HCT116 (cell line): ENCODE measurements at regions of chr15 and their contacts with region 1.

Region 1: GRCh38 chr15:91852741-91853510 is 582 bp upstream of the SLCO3A1 start:
- DNase-seq: no peak
- ATAC-seq: peak; percentile 80
- H3K4me3 ChIP-seq: peak overlapping the region; percentile 51 to 65
- H3K27ac ChIP-seq: no peak overlapping the region; the same call in 1 of the 2 replicates
- H3K4me1 ChIP-seq: peaks cover 0 to 16% of the 10 kb centered on the region in 2 experiments; a peak in 2 of 4 replicates
- H3K27me3 ChIP-seq: peaks cover 11% of the 10 kb centered on the region; the same call in 1 of the 2 replicates
- CTCF ChIP-seq: peak; percentile 43 to 70 (median 60)
- POLR2A ChIP-seq: no peak
- RAD21 ChIP-seq: peak; percentile 52

Region 2: GRCh38 chr15:91302588-91303439 is 550.1 kb before region 1 on chr15:
- CTCF ChIA-PET with region 1: interaction called, 3 read pairs
- POLR2A ChIA-PET with region 1: no interaction called
- RAD21 ChIA-PET with region 1: no interaction called
- intact Hi-C with region 1: loop called (anchors 2 kb)
- DNase-seq: peak; percentile 51
- ATAC-seq: peak; percentile 89
- H3K4me3 ChIP-seq: no peak overlapping the region
- H3K27ac ChIP-seq: no peak overlapping the region
- H3K4me1 ChIP-seq: no peaks in the 10 kb centered on the region
- H3K27me3 ChIP-seq: peaks cover 74% of the 10 kb centered on the region
- CTCF ChIP-seq: peak; percentile 67 to 78 (median 75)
- POLR2A ChIP-seq: no peak
- RAD21 ChIP-seq: peak; percentile 87

Region 3: DNA sequence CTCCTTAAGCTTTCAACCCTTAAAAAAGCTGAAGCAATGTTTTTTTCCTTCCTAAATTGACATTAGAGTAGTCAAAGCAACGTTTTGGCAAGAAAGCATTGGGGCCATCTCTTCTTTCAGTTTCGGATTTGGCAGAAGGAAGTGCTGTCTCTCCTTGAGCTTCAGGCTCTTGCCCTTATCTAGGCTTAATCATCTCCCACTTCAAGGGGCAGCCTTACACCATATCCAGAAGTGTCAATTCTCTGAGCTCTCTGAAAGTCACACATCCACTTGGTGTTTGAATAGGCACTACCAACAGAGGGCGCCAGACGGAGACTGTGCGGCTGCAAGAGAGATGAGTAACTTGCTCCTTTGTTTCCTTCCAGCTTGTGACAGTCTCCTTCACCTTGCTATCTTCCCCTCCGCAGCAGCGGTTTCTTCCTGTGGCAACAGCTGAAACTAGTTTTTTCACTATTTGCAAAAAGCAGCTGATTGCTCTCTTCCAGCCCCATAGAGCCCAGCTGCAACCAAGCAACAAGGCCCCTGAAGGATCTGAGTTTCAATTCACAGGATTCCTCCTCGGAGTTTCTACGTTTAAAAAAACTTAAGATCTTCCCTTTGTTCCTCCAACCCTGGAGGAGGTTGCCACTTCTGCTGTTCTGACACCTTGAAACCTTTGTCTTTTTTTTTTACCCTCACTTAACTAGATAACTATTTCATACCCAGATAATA is 146.4 kb before region 1 on chr15:
- CTCF ChIA-PET with region 1: interaction called, 5 read pairs
- POLR2A ChIA-PET with region 1: no interaction called
- RAD21 ChIA-PET with region 1: no interaction called
- intact Hi-C with region 1: loop called (anchors 5 kb)
- DNase-seq: peak; percentile 49
- ATAC-seq: peak; percentile 90
- H3K4me3 ChIP-seq: no peak overlapping the region
- H3K27ac ChIP-seq: no peak overlapping the region
- H3K4me1 ChIP-seq: peaks cover 0 to 11% of the 10 kb centered on the region in 2 experiments; a peak in 2 of 4 replicates
- H3K27me3 ChIP-seq: peaks cover 20% of the 10 kb centered on the region; the same call in 1 of the 2 replicates
- CTCF ChIP-seq: peak; percentile 55 to 95 (median 95)
- POLR2A ChIP-seq: no peak
- RAD21 ChIP-seq: peak; percentile 59

Region 4: GRCh38 chr15:91801836-91802534 is 50.9 kb before region 1 on chr15:
- CTCF ChIA-PET with region 1: no interaction called
- POLR2A ChIA-PET with region 1: no interaction called
- RAD21 ChIA-PET with region 1: no interaction called
- intact Hi-C with region 1: no loop called
- DNase-seq: no peak
- ATAC-seq: no peak
- H3K4me3 ChIP-seq: no peak overlapping the region
- H3K27ac ChIP-seq: no peak overlapping the region
- H3K4me1 ChIP-seq: no peaks in the 10 kb centered on the region
- H3K27me3 ChIP-seq: peaks cover 36% of the 10 kb centered on the region
- CTCF ChIP-seq: no peak
- POLR2A ChIP-seq: no peak
- RAD21 ChIP-seq: no peak

Region 5: GRCh38 chr15:91833056-91833455 is 19.9 kb before region 1 on chr15:
- CTCF ChIA-PET with region 1: no interaction called
- POLR2A ChIA-PET with region 1: no interaction called
- RAD21 ChIA-PET with region 1: no interaction called
- intact Hi-C with region 1: no loop called
- DNase-seq: no peak
- ATAC-seq: no peak
- H3K4me3 ChIP-seq: no peak overlapping the region
- H3K27ac ChIP-seq: no peak overlapping the region
- H3K4me1 ChIP-seq: no peaks in the 10 kb centered on the region
- H3K27me3 ChIP-seq: peaks cover 8% of the 10 kb centered on the region; the same call in 1 of the 2 replicates
- CTCF ChIP-seq: no peak
- POLR2A ChIP-seq: no peak
- RAD21 ChIP-seq: no peak

Region 6: GRCh38 chr15:91942676-91943576 is 90.0 kb after region 1 on chr15:
- CTCF ChIA-PET with region 1: no interaction called
- POLR2A ChIA-PET with region 1: no interaction called
- RAD21 ChIA-PET with region 1: no interaction called
- intact Hi-C with region 1: loop called (anchors 5 kb)
- DNase-seq: peak; percentile 28
- ATAC-seq: peak; percentile 59
- H3K4me3 ChIP-seq: peak overlapping the region in 1 of 2 experiments; percentile 27; a peak in 1 of 4 replicates
- H3K27ac ChIP-seq: no peak overlapping the region
- H3K4me1 ChIP-seq: peaks cover 0 to 39% of the 10 kb centered on the region in 2 experiments; a peak in 2 of 4 replicates
- H3K27me3 ChIP-seq: no peaks in the 10 kb centered on the region
- CTCF ChIP-seq: no peak
- POLR2A ChIP-seq: no peak
- RAD21 ChIP-seq: no peak; the same call in 1 of the 2 replicates

Region 7: GRCh38 chr15:92062505-92062904 is 209.6 kb after region 1 on chr15:
- CTCF ChIA-PET with region 1: no interaction called
- POLR2A ChIA-PET with region 1: no interaction called
- RAD21 ChIA-PET with region 1: no interaction called
- intact Hi-C with region 1: loop called (anchors 5 kb)
- DNase-seq: no peak
- ATAC-seq: no peak
- H3K4me3 ChIP-seq: no peak overlapping the region
- H3K27ac ChIP-seq: no peak overlapping the region
- H3K4me1 ChIP-seq: no peaks in the 10 kb centered on the region
- H3K27me3 ChIP-seq: peaks cover 9% of the 10 kb centered on the region; the same call in 1 of the 2 replicates
- CTCF ChIP-seq: no peak
- POLR2A ChIP-seq: no peak
- RAD21 ChIP-seq: no peak

Region 8: DNA sequence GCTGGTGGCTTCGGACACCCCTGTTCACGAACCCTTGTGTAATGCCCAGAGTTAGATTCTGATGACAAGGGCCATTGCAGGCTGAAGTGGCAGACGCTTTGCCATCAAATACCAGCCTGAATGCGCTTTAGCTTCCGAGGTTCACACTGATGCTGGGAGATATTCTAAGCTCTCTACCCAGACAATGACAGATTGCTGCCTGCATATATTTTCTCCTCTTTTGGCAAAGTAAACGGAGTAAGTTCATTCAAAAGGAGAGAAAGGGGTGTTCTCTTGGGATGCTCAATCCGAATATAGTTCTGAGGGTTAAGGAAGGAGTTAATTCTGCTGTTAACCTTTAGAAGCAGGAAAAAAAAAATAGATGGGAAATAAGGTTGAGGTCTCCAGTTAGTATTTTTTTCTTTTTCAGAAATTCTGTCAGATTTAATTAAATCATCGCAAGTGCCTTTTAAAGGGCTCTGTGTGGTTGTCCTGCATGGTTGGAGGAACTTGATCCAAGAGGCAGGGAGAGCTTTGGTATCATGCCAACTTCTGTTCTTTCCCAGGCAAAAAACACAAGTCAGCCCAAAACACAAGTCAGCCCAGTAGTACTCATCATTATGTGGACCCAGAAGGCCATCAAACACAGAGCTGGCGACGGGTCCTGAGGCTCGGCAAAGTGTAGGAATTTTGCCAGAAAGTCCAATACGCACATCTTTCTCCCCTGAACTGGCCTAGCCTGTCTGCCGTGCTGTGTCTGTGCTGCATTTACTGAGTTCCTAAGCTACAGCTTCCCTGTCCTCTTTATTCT is 469.8 kb after region 1 on chr15:
- CTCF ChIA-PET with region 1: no interaction called
- POLR2A ChIA-PET with region 1: no interaction called
- RAD21 ChIA-PET with region 1: no interaction called
- intact Hi-C with region 1: no loop called
- DNase-seq: no peak
- ATAC-seq: no peak
- H3K4me3 ChIP-seq: no peak overlapping the region
- H3K27ac ChIP-seq: no peak overlapping the region
- H3K4me1 ChIP-seq: no peaks in the 10 kb centered on the region
- H3K27me3 ChIP-seq: peaks cover 55% of the 10 kb centered on the region
- CTCF ChIP-seq: no peak
- POLR2A ChIP-seq: no peak
- RAD21 ChIP-seq: no peak